H1 (cell line): ENCODE measurements at regions of chr14 and their contacts with region 1.

Region 1: GRCh38 chr14:60266021-60266937 is 17.3 kb downstream of the PPM1A start:
- DNase-seq: no peak
- H3K4me3 ChIP-seq: no peak overlapping the region
- H3K27ac ChIP-seq: no peak overlapping the region
- H3K4me1 ChIP-seq: no peaks in the 10 kb centered on the region
- H3K27me3 ChIP-seq: no peaks in the 10 kb centered on the region
- CTCF ChIP-seq: peak in 2 of 3 experiments; percentile 53 to 62; a peak in 2 of 4 replicates
- EP300 ChIP-seq: no peak
- POLR2A ChIP-seq: no peak
- RAD21 ChIP-seq: peak; percentile 77

Region 2: DNA sequence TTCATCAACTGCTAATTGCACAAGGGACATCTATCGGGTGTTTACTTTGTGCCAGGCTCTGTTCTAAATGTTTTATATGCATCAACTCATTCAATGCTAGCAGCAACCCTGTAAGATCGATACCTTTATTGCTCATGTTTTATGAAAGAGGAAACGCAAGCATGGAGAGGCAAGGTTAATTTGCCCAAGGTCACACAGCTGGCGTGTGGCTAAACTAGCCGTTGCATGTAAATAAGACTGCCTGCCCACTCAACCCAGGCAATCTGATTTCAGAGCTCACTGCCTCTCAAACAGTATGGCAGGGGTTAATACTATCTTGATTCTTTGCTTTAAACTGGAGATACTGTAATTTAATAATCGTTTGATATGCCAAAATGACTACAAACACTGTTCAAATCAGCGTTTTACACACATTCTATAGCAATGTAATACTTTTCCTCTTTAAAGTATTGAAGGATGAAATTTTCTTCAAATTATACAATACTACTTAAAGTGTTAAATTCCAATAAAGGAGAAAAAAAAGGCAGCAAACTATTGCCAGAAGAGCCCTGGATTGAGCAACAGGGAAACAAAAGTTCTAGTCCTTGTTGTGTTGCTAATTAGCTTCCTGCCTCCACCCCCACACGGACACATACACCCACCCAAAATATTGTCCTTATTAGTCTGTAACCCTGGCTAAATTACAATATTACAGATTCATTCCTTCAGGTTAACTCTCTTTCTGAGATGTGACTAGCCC is 62.0 kb before region 1 on chr14:
- CTCF ChIA-PET with region 1: no interaction called
- POLR2A ChIA-PET with region 1: no interaction called
- DNase-seq: no peak
- H3K4me3 ChIP-seq: peak overlapping the region in 1 of 4 experiments; percentile 19; a peak in 1 of 8 replicates
- H3K27ac ChIP-seq: no peak overlapping the region
- H3K4me1 ChIP-seq: peaks cover 0 to 10% (median 5%) of the 10 kb centered on the region in 4 experiments; a peak in 4 of 7 replicates
- H3K27me3 ChIP-seq: no peaks in the 10 kb centered on the region
- CTCF ChIP-seq: no peak
- EP300 ChIP-seq: no peak
- POLR2A ChIP-seq: no peak
- RAD21 ChIP-seq: no peak

Region 3: GRCh38 chr14:60233891-60234290 is 32.4 kb before region 1 on chr14:
- CTCF ChIA-PET with region 1: no interaction called
- POLR2A ChIA-PET with region 1: no interaction called
- DNase-seq: no peak
- H3K4me3 ChIP-seq: no peak overlapping the region
- H3K27ac ChIP-seq: no peak overlapping the region
- H3K4me1 ChIP-seq: no peaks in the 10 kb centered on the region; a peak in 1 of 7 replicates
- H3K27me3 ChIP-seq: no peaks in the 10 kb centered on the region
- CTCF ChIP-seq: no peak
- EP300 ChIP-seq: no peak
- POLR2A ChIP-seq: no peak
- RAD21 ChIP-seq: no peak

Region 4: GRCh38 chr14:60248697-60249318 is 17.5 kb before region 1 on chr14 and contains the start of gene PPM1A:
- CTCF ChIA-PET with region 1: interaction called, 57 read pairs
- POLR2A ChIA-PET with region 1: interaction called, 9 read pairs
- DNase-seq: peak; percentile 85 to 93
- H3K4me3 ChIP-seq: peak within 1 kb of the TSS; percentile 77 to 96 (median 87)
- H3K27ac ChIP-seq: peak within 1 kb of the TSS; percentile 98
- H3K4me1 ChIP-seq: peaks cover 4 to 12% (median 9%) of the 10 kb centered on the region in 4 experiments
- H3K27me3 ChIP-seq: no peaks in the 10 kb centered on the region
- CTCF ChIP-seq: 0 out of 4 replicates have a peak, but pooled peaks of 1 of the 3 experiments have one; percentile 2
- EP300 ChIP-seq: peak in 1 of 2 experiments; percentile 79; a peak in 1 of 3 replicates
- POLR2A ChIP-seq: peak; percentile 93 to 98
- RAD21 ChIP-seq: no peak
- total RNA-seq, gene PPM1A: 45.2 and 51.2 TPM in 2 replicates

Region 5: GRCh38 chr14:60276342-60276741 is 10.1 kb after region 1 on chr14:
- CTCF ChIA-PET with region 1: interaction called, 18 read pairs
- POLR2A ChIA-PET with region 1: no interaction called
- DNase-seq: no peak
- H3K4me3 ChIP-seq: no peak overlapping the region
- H3K27ac ChIP-seq: no peak overlapping the region
- H3K4me1 ChIP-seq: peaks cover 0 to 15% (median 12%) of the 10 kb centered on the region in 4 experiments; a peak in 5 of 7 replicates
- H3K27me3 ChIP-seq: no peaks in the 10 kb centered on the region
- CTCF ChIP-seq: no peak
- EP300 ChIP-seq: no peak
- POLR2A ChIP-seq: no peak
- RAD21 ChIP-seq: no peak

Region 6: DNA sequence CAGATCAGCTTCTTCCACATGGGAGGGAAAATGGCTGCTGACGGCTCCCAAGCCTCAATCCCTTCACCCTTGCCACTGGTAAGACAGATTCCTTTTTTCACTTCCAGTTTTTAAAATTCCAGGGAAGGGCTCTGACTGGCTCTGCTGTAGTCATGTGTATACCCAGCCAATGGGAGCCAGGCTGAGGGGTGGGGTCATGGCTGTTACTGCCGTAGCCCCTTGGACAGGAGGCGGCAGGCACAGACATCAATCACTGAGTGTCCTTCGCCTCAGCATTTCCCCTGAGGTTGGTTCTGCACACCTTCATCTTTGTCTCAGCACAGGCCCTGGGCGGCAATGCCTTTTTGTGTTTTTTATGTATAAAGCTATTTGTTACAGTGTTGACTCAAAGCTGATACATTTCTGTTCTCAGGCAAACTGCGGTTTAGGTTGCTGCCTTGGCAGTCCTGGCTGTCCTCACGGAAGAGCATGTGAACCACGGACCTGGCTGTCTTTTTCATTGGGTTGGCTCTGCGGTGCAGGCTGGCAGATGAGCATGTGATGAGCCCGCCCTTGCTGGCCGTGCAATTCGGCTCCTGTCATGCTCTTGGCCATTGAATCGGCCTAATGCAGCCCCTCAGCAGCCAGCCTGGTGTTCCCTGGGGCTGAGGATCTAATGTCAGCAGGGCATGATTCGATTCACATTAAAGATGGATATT is 57.1 kb after region 1 on chr14:
- CTCF ChIA-PET with region 1: interaction called, 73 read pairs
- POLR2A ChIA-PET with region 1: interaction called, 4 read pairs
- DNase-seq: no peak
- H3K4me3 ChIP-seq: no peak overlapping the region
- H3K27ac ChIP-seq: no peak overlapping the region
- H3K4me1 ChIP-seq: peaks cover 3 to 9% (median 6%) of the 10 kb centered on the region in 4 experiments; a peak in 6 of 7 replicates
- H3K27me3 ChIP-seq: peaks cover 0 to 5% (median 1%) of the 10 kb centered on the region in 4 experiments; a peak in 3 of 7 replicates
- CTCF ChIP-seq: no peak
- EP300 ChIP-seq: no peak
- POLR2A ChIP-seq: no peak
- RAD21 ChIP-seq: no peak